ENCODE measurements at regions of chr7 and their contacts with region 1.

Region 1: DNA sequence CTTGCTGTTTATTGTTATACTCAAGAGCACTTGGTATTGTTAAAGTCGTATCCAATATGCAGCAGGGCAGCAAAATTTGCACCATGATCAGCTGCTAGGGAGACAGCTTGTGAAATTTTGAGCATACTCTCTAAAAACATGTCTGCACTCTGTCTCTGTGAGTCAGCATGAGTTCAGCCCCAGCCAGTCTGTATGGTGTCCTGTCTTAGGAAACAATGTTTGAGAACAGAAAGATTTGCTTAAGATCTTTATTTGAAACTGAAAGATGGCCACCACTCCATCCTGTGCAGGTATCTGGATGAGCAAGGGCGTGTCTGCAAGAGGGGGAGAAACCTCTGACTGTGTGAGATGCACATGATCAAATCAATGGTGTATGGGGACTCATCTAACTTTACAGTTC is 97.1 kb downstream of the GNAI1 start:
- DNase-seq: peak; percentile 84
- H3K4me3 ChIP-seq: no peak overlapping the region
- H3K27ac ChIP-seq: peak overlapping the region; percentile 59
- H3K4me1 ChIP-seq: peaks cover 25% of the 10 kb centered on the region
- H3K27me3 ChIP-seq: no peaks in the 10 kb centered on the region
- CTCF ChIP-seq: no peak

Region 2: GRCh38 chr7:80312139-80312661 is 80.5 kb after region 1 on chr7:
- CTCF ChIA-PET with region 1: no interaction called
- dilution Hi-C with region 1: loop called (anchors 5 kb)
- in situ Hi-C with region 1: no loop called
- intact Hi-C with region 1: no loop called
- DNase-seq: peak; percentile 78
- H3K4me3 ChIP-seq: peak overlapping the region in 2 of 3 experiments; percentile 15 to 29
- H3K27ac ChIP-seq: peak overlapping the region; percentile 99
- H3K4me1 ChIP-seq: peaks cover 20% of the 10 kb centered on the region
- H3K27me3 ChIP-seq: no peaks in the 10 kb centered on the region
- CTCF ChIP-seq: peak in 1 of 2 donors; percentile 6